ENCODE measurements at regions of chr6 and their contacts with region 1.

Region 1: GRCh38 chr6:19851241-19852089 is 14.3 kb downstream of the ID4 start:
- DNase-seq: peak; percentile 49
- ATAC-seq: peak; percentile 100
- H3K4me3 ChIP-seq: no peak overlapping the region
- H3K27ac ChIP-seq: no peak overlapping the region
- H3K4me1 ChIP-seq: peaks cover 5% of the 10 kb centered on the region in 2 experiments; a peak in 2 of 4 replicates
- H3K27me3 ChIP-seq: no peaks in the 10 kb centered on the region
- CTCF ChIP-seq: peak; percentile 75 to 87 (median 82)
- POLR2A ChIP-seq: no peak
- RAD21 ChIP-seq: peak; percentile 97

Region 2: GRCh38 chr6:18997375-18997826 is 854.1 kb before region 1 on chr6:
- CTCF ChIA-PET with region 1: interaction called, 4 read pairs
- POLR2A ChIA-PET with region 1: no interaction called
- RAD21 ChIA-PET with region 1: no interaction called
- intact Hi-C with region 1: loop called (anchors 5 kb)
- DNase-seq: peak; percentile 52
- ATAC-seq: peak; percentile 100
- H3K4me3 ChIP-seq: no peak overlapping the region
- H3K27ac ChIP-seq: no peak overlapping the region
- H3K4me1 ChIP-seq: no peaks in the 10 kb centered on the region
- H3K27me3 ChIP-seq: no peaks in the 10 kb centered on the region
- CTCF ChIP-seq: peak; percentile 45 to 68 (median 67); a peak in 5 of 6 replicates
- POLR2A ChIP-seq: no peak
- RAD21 ChIP-seq: peak; percentile 59

Region 3: DNA sequence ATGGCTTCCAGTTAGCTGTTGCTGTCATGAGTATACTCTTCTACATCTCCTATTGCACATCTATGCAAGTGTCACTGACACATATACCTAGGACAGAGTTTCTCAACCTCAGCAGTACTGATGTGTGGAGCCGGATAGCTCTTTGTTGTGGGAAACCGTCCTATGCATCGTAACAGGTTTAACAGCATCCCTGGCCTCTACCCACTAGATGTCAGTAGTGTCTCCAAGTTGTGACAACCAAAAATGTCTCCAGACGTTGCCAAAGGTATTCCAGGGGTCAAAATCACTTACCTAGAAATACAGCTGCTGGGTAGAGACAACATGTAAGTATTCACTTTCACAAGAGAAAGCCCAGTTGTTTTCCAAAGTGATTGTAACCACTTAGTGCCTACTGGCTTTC is 826.7 kb before region 1 on chr6:
- CTCF ChIA-PET with region 1: interaction called, 7 read pairs
- POLR2A ChIA-PET with region 1: no interaction called
- RAD21 ChIA-PET with region 1: no interaction called
- intact Hi-C with region 1: loop called (anchors 2 kb)
- DNase-seq: peak; percentile 54
- ATAC-seq: peak; percentile 92
- H3K4me3 ChIP-seq: no peak overlapping the region
- H3K27ac ChIP-seq: no peak overlapping the region
- H3K4me1 ChIP-seq: no peaks in the 10 kb centered on the region
- H3K27me3 ChIP-seq: no peaks in the 10 kb centered on the region
- CTCF ChIP-seq: peak; percentile 61 to 73 (median 66); a peak in 5 of 6 replicates
- POLR2A ChIP-seq: no peak
- RAD21 ChIP-seq: peak; percentile 87

Region 4: GRCh38 chr6:19472847-19473246 is 378.6 kb before region 1 on chr6:
- CTCF ChIA-PET with region 1: no interaction called
- POLR2A ChIA-PET with region 1: no interaction called
- RAD21 ChIA-PET with region 1: no interaction called
- intact Hi-C with region 1: loop called (anchors 5 kb)
- DNase-seq: no peak
- ATAC-seq: peak; percentile 77; the same call in 1 of the 2 replicates
- H3K4me3 ChIP-seq: no peak overlapping the region
- H3K27ac ChIP-seq: no peak overlapping the region
- H3K4me1 ChIP-seq: peaks cover 7 to 9% of the 10 kb centered on the region in 2 experiments; a peak in 3 of 4 replicates
- H3K27me3 ChIP-seq: no peaks in the 10 kb centered on the region
- CTCF ChIP-seq: peak; percentile 38 to 85 (median 75); a peak in 5 of 6 replicates
- POLR2A ChIP-seq: no peak
- RAD21 ChIP-seq: peak; percentile 62

Measured in HCT116 (cell line).